Activated T-helper 1 cell treated with anti-CD3 and anti-CD28 coated beads, Interleukin-12 subunit alpha, Interleukin-12 subunit beta, Interleukin-2, Interleukin-4 antibody, amounts not matched to agents 30 ng/mL and 10 ng/mL and 1 ng/mL, durations not matched to agents 14 hours and 24 hours and 36 hours (primary cell): ENCODE measurements at regions of chr3 and their contacts with region 1.

Region 1: GRCh38 chr3:197959898-197960693 is at the start of gene LMLN:
- DNase-seq: peak; percentile 94
- H3K4me3 Mint-ChIP-seq: peak within 1 kb of the TSS; percentile 86
- H3K27ac Mint-ChIP-seq: peak within 1 kb of the TSS; percentile 93
- H3K4me1 Mint-ChIP-seq: peaks cover 51% of the 10 kb centered on the region
- H3K27me3 Mint-ChIP-seq: no peaks in the 10 kb centered on the region
- total RNA-seq, gene LMLN: 2.8 and 3.7 TPM in 2 replicates

Region 2: DNA sequence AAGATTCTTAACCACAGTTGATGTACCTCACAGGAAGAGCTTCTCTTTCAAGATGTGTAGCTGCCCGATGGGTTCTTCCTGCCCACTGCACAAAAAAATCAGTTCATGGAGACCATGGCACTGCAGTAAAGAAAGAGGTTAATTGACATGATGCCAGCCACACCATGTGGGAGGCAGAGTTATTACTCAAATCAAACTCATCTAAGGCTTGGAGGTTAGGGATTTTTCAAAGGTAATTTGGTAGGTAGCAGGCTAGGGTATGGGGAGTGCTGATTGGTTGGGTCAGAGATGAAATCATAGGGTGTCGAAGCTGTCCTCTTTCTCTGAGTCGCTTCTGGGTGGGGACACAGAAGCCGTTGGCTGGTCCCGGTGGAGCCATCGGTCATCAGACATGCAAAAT is 346.9 kb before region 1 on chr3:
- intact Hi-C with region 1: no loop called
- DNase-seq: no peak
- H3K4me3 Mint-ChIP-seq: no peak overlapping the region
- H3K27ac Mint-ChIP-seq: peak overlapping the region; percentile 18
- H3K4me1 Mint-ChIP-seq: peaks cover 14% of the 10 kb centered on the region
- H3K27me3 Mint-ChIP-seq: no peaks in the 10 kb centered on the region

Region 3: DNA sequence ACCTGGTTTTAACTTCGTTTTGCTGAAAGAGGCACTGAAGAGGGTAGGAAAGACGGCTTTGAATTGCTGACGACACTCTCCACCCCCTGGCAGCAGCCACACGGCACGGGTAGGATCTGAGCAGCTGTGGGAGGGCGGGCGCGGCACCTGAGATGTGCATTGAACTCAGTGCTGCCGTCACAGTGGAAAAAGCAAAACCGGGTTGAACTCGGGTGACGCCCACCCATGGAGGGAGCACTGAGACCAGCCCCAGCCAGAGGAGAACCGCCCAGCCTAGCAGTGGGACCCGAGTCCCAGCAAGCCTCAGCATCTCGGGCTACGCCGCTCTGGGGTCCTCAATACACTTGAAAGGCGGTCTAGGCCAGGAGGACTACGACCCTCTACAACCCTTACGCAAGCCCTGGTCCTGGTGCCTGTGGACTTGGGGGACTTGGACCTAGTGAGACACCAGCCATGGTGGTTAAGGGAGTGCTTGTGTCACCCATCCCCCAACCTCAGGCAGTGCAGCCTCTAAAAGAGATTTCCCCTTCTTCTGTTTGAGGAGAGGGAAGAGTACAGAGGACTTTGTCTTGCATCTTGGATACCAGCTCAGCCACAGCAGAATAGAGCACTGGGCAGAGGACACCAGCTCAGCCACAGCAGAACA is 60.1 kb before region 1 on chr3:
- intact Hi-C with region 1: no loop called
- DNase-seq: no peak
- H3K4me3 Mint-ChIP-seq: no peak overlapping the region
- H3K27ac Mint-ChIP-seq: no peak overlapping the region
- H3K4me1 Mint-ChIP-seq: no peaks in the 10 kb centered on the region
- H3K27me3 Mint-ChIP-seq: peaks cover 4% of the 10 kb centered on the region

Region 4: DNA sequence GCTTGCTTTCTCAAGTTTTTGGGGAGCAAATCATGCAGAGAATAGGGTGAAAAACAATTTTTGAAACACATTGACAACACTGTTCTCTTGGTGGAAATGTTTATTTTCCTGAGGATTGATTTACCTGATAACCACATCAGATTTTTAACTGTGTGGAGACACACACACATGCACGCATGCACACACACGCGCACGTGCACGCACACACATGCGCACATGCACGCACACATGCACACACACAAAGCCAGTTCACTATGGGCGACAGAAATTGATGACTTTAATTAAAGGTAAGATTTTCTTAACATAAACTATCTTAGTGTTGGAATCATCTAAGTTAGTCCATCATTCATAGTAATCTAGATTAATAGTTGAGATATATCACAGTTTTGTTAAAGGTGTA is 15.2 kb after region 1 on chr3:
- intact Hi-C with region 1: no loop called
- DNase-seq: no peak
- H3K4me3 Mint-ChIP-seq: no peak overlapping the region
- H3K27ac Mint-ChIP-seq: no peak overlapping the region
- H3K4me1 Mint-ChIP-seq: no peaks in the 10 kb centered on the region
- H3K27me3 Mint-ChIP-seq: peaks cover 4% of the 10 kb centered on the region

Region 5: GRCh38 chr3:198051836-198052235 is 91.7 kb after region 1 on chr3:
- intact Hi-C with region 1: no loop called
- DNase-seq: no peak
- H3K4me3 Mint-ChIP-seq: no peak overlapping the region
- H3K27ac Mint-ChIP-seq: no peak overlapping the region
- H3K4me1 Mint-ChIP-seq: no peaks in the 10 kb centered on the region
- H3K27me3 Mint-ChIP-seq: peaks cover 13% of the 10 kb centered on the region

Region 6: DNA sequence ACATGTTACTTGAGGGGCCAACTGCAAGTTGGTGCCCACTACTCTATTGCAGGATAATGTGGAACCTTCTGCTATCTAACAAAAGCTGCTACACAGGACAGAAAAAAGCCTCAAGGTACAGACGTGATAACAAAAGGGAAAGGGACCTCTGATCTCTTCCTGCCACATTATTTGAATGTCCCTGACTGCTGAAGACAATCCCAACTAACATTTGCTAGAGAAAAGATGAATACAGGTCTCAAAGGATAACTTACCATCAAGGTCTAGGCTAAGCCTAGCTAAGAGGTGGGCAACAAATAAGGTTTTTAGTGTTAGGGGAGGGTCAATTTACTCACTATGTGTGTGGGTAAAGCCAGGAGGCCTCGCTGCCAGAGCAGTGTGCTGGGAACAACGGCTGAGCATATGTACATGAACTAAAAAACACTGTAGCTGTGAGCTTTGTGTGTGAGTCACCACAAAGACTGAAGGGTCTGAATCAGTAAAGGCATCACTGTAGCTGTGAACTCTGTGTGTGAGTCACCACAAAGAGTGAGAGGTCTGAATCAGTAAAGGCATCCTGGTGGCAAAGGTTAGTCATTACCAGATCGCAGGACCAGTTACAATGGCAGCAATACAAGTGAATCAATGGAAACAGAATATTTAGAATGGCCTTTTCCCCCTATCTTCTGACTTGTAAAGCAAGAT is 111.6 kb after region 1 on chr3:
- intact Hi-C with region 1: loop called (anchors 1 kb)
- DNase-seq: peak; percentile 20
- H3K4me3 Mint-ChIP-seq: no peak overlapping the region
- H3K27ac Mint-ChIP-seq: peak overlapping the region; percentile 85
- H3K4me1 Mint-ChIP-seq: peaks cover 27% of the 10 kb centered on the region
- H3K27me3 Mint-ChIP-seq: peaks cover 32% of the 10 kb centered on the region

Region 7: GRCh38 chr3:198080521-198081280 is 120.6 kb after region 1 on chr3:
- intact Hi-C with region 1: loop called (anchors 1 kb)
- DNase-seq: peak; percentile 77
- H3K4me3 Mint-ChIP-seq: peak overlapping the region; percentile 81
- H3K27ac Mint-ChIP-seq: peak overlapping the region; percentile 67
- H3K4me1 Mint-ChIP-seq: peaks cover 17% of the 10 kb centered on the region
- H3K27me3 Mint-ChIP-seq: peaks cover 63% of the 10 kb centered on the region